Activated CD8-positive, alpha-beta T cell treated with anti-CD3 and anti-CD28 coated beads, Interleukin-2, amount 10 ng/mL, durations not matched to agents 7 days and 5 days (primary cell): ENCODE measurements at regions of chr15 and their contacts with region 1.

Region 1: DNA sequence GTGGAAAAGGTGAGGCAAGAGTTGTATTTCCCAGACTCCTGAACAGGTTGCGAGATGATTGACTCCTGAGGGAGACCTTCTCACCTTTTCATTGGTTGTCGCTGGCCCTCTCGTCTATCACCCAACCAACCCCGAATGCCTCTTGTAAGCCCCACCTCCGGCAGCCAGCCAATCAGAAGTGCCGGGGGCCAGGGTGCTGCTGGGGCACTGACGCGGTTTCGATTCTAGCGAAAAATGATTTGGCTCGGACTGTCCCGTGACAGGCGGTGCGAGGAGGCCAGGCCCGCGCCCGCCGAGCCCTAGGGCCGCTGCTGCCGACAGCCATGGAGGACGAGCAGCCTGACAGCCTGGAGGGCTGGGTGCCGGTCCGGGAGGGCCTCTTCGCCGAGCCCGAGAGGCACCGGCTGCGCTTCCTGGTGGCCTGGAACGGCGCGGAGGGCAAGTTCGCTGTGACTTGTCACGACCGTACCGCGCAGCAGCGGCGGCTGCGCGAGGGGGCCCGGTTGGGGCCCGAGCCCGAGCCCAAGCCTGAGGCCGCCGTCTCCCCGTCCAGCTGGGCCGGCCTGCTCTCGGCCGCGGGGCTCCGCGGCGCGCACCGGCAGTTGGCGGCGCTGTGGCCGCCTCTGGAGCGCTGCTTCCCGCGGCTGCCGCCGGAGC is at the start of gene WHAMM:
- DNase-seq: peak; percentile 97
- ATAC-seq: peak; percentile 97
- H3K4me3 Mint-ChIP-seq: peak within 1 kb of the TSS; percentile 82
- H3K27ac Mint-ChIP-seq: peak within 1 kb of the TSS; percentile 87
- H3K4me1 Mint-ChIP-seq: peaks cover 32% of the 10 kb centered on the region
- H3K27me3 Mint-ChIP-seq: peaks cover 5% of the 10 kb centered on the region
- total RNA-seq, gene WHAMM: 11.2 to 12.5 TPM

Region 2: DNA sequence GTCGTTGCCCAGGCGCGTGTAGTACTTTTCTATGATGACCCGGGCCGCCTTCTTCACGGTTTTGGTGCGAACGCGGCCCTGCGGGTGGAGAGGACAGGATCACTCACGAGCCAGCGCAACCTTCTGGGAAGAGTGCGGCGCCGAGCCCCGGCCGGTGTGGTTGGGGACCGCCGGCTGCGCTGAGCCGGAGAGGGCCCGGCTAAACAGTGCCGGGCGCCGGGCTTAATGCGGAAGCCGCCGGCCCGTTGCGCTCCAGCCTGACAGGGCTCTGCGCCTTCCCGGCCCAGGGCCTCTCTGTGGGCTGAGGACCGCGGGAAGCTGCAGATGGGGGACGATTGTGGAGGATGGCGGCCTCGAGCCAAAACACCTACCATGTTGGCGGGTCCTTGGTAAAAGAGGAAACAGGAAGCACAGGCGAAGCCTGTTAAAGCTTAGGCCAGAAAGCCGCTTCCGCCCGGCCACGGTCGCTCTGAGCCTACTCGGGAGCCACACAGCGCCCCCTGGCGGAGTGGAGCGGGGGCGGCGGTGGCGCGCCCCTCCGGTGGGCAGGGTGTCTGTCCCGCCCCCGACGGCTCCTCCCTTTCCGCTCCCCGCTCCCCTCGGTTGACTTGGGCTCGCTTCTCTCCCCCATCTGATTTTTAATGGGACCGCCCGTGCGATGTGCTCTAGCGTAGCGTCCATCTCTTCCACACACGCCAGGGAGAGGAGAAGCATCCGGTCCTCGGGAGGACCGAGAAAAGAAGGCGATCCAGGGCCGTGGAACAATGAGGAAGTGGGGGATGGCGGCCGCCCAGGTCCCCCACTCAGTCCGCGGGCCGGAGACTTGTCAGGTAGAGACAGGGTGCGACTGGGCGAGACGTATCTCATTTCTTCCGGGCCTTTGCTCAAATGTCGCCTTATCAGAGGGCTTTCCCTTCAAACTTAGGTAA is 269.2 kb before region 1 on chr15 and contains the start of gene RPS17:
- CTCF ChIA-PET with region 1: interaction called, 3 read pairs
- POLR2A ChIA-PET with region 1: interaction called, 31 read pairs
- DNase-seq: peak; percentile 98
- ATAC-seq: peak; percentile 96
- H3K4me3 Mint-ChIP-seq: peak within 1 kb of the TSS; percentile 97
- H3K27ac Mint-ChIP-seq: peak within 1 kb of the TSS; percentile 97
- H3K4me1 Mint-ChIP-seq: peaks cover 45% of the 10 kb centered on the region
- H3K27me3 Mint-ChIP-seq: no peaks in the 10 kb centered on the region
- total RNA-seq, gene RPS17: 1,755 to 1,800 TPM

Region 3: GRCh38 chr15:82749951-82750830 is 59.3 kb before region 1 on chr15:
- CTCF ChIA-PET with region 1: interaction called, 18 read pairs
- POLR2A ChIA-PET with region 1: interaction called, 44 read pairs
- DNase-seq: peak; percentile 90
- ATAC-seq: peak; percentile 97
- H3K4me3 Mint-ChIP-seq: peak overlapping the region; percentile 96
- H3K27ac Mint-ChIP-seq: peak overlapping the region; percentile 96
- H3K4me1 Mint-ChIP-seq: peaks cover 34% of the 10 kb centered on the region
- H3K27me3 Mint-ChIP-seq: no peaks in the 10 kb centered on the region

Region 4: GRCh38 chr15:82832601-82833361 is 23.2 kb after region 1 on chr15:
- CTCF ChIA-PET with region 1: interaction called, 13 read pairs
- POLR2A ChIA-PET with region 1: interaction called, 12 read pairs
- DNase-seq: peak; percentile 38
- ATAC-seq: peak; percentile 55
- H3K4me3 Mint-ChIP-seq: peak overlapping the region; percentile 12
- H3K27ac Mint-ChIP-seq: peak overlapping the region; percentile 86
- H3K4me1 Mint-ChIP-seq: peaks cover 27% of the 10 kb centered on the region
- H3K27me3 Mint-ChIP-seq: no peaks in the 10 kb centered on the region

Region 5: GRCh38 chr15:82862886-82863285 is 53.4 kb after region 1 on chr15:
- CTCF ChIA-PET with region 1: no interaction called
- POLR2A ChIA-PET with region 1: no interaction called
- DNase-seq: no peak
- ATAC-seq: no peak
- H3K4me3 Mint-ChIP-seq: no peak overlapping the region
- H3K27ac Mint-ChIP-seq: no peak overlapping the region
- H3K4me1 Mint-ChIP-seq: peaks cover 5% of the 10 kb centered on the region
- H3K27me3 Mint-ChIP-seq: no peaks in the 10 kb centered on the region

Region 6: GRCh38 chr15:82985688-82986441 is 176.3 kb after region 1 on chr15 and contains the start of gene RAMAC:
- CTCF ChIA-PET with region 1: no interaction called
- POLR2A ChIA-PET with region 1: interaction called, 10 read pairs
- DNase-seq: peak; percentile 95
- ATAC-seq: peak; percentile 93
- H3K4me3 Mint-ChIP-seq: peak within 1 kb of the TSS; percentile 98
- H3K27ac Mint-ChIP-seq: peak within 1 kb of the TSS; percentile 97
- H3K4me1 Mint-ChIP-seq: peaks cover 36% of the 10 kb centered on the region
- H3K27me3 Mint-ChIP-seq: no peaks in the 10 kb centered on the region
- total RNA-seq, gene RAMAC: 25.8 to 27.0 TPM

Region 7: DNA sequence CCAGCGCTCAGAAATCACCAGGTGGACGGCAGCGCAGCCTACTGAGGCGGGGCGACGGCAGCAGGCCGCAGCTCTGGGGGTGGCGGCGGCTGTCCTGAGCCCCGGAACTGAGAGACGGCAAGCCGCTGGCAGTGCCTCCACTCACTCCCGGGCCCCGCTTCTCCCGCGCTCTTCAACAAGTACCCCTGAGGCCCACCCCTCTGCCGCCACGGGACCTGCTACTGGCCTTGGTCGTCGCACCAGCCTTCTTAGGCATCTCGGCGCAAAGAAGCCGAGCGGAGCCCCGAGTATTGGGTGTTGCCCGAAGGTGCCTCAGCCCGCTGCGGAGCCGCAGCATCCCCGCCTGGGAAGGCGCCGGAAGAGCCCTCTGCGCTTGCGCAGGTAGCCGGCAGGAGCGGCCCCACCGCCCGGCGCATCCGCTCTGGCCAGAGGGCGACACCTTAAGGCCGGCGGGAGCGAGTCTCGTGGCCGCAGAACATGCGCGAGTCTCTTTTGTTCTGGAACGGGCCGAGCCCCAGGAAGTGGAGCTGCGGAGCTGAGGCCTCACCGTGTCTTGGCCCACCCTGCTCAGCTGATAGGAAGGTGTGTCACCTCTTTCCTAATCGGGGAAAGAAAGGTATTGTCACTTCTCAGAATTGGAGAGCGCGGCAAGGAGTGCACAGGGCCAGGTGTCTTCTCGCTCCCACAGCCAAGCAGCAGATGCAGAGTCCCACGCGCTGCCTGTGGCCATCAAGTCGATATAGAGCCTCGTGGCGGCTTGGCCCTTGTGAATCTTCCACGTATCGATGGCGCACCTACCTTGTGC is 201.9 kb after region 1 on chr15 and contains the start of gene C15orf40:
- CTCF ChIA-PET with region 1: interaction called, 4 read pairs
- POLR2A ChIA-PET with region 1: interaction called, 20 read pairs
- DNase-seq: peak; percentile 88
- ATAC-seq: peak; percentile 89
- H3K4me3 Mint-ChIP-seq: peak within 1 kb of the TSS; percentile 87
- H3K27ac Mint-ChIP-seq: peak within 1 kb of the TSS; percentile 90
- H3K4me1 Mint-ChIP-seq: peaks cover 50% of the 10 kb centered on the region
- H3K27me3 Mint-ChIP-seq: no peaks in the 10 kb centered on the region
- total RNA-seq, gene C15orf40: 25.2 to 31.0 TPM